ENCODE measurements at regions of chrX and their contacts with region 1.

Region 1: DNA sequence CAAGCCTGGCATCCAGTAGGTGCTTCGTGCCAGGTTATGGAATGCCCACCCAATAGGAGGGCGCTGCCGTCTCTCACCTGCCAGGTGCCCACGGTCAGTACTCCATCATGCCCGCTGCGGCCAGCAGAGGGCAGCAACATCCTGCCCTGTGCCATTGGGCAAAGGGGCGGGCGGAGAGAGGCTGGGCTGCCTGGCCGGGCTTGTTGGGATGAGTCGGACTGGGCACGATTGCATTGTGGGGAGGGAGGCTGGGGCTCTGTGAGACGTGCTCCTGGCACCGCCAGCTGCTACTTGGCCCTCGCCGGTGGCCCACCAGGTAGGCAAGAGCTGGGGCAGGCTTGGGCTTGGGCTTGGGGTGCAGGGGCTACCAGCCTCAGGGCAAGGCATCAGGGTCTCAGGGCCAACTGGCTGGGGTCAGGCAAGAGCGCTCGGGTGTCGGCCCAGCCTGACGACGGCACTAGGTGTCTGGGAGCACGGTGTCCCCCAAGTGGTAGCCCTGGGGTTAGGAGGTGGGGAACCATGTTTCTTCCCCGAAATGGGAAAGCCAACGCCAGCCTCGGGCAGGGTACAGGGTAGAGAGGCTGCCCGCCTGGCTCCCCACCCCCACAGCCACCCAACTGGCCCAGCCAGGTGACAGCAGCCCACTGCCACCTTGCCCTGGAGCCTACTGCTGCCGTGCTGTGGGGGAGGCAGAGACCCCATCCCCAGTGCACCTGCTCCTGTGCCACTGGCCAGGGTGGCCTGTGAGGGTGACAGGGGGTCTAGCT is at the start of gene PLXNB3:
- DNase-seq: peak; percentile 92
- H3K4me3 Mint-ChIP-seq: peak within 1 kb of the TSS; percentile 83
- H3K27ac Mint-ChIP-seq: peak within 1 kb of the TSS; percentile 54
- H3K4me1 Mint-ChIP-seq: peaks cover 11% of the 10 kb centered on the region
- H3K27me3 Mint-ChIP-seq: no peaks in the 10 kb centered on the region
- CTCF ChIP-seq: peak; percentile 70
- total RNA-seq, gene PLXNB3: 37.5 and 49.2 TPM in 2 replicates

Region 2: GRCh38 chrX:153708415-153708814 is 55.8 kb before region 1 on chrX:
- CTCF ChIA-PET with region 1: no interaction called
- intact Hi-C with region 1: no loop called
- DNase-seq: peak; percentile 88
- H3K4me3 Mint-ChIP-seq: peak overlapping the region; percentile 17
- H3K27ac Mint-ChIP-seq: peak overlapping the region; percentile 66
- H3K4me1 Mint-ChIP-seq: peaks cover 8% of the 10 kb centered on the region
- H3K27me3 Mint-ChIP-seq: no peaks in the 10 kb centered on the region
- CTCF ChIP-seq: peak; percentile 60

Region 3: GRCh38 chrX:153885968-153886903 is 122.1 kb after region 1 on chrX and contains the start of gene L1CAM:
- CTCF ChIA-PET with region 1: no interaction called
- intact Hi-C with region 1: loop called (anchors 2 kb)
- DNase-seq: no peak
- H3K4me3 Mint-ChIP-seq: peak within 1 kb of the TSS; percentile 62
- H3K27ac Mint-ChIP-seq: no peak within 1 kb of the TSS
- H3K4me1 Mint-ChIP-seq: peaks cover 26% of the 10 kb centered on the region
- H3K27me3 Mint-ChIP-seq: peaks cover 29% of the 10 kb centered on the region
- CTCF ChIP-seq: no peak
- total RNA-seq, gene L1CAM: 14.2 and 16.1 TPM in 2 replicates

Region 4: GRCh38 chrX:153947009-153947769 is 183.0 kb after region 1 on chrX:
- CTCF ChIA-PET with region 1: interaction called, 4 read pairs
- intact Hi-C with region 1: loop called (anchors 5 kb)
- DNase-seq: peak; percentile 92
- H3K4me3 Mint-ChIP-seq: no peak overlapping the region
- H3K27ac Mint-ChIP-seq: peak overlapping the region; percentile 21
- H3K4me1 Mint-ChIP-seq: no peaks in the 10 kb centered on the region
- H3K27me3 Mint-ChIP-seq: no peaks in the 10 kb centered on the region
- CTCF ChIP-seq: peak; percentile 81

Region 5: GRCh38 chrX:154351183-154352011 is 587.2 kb after region 1 on chrX:
- CTCF ChIA-PET with region 1: no interaction called
- intact Hi-C with region 1: no loop called
- DNase-seq: no peak
- H3K4me3 Mint-ChIP-seq: no peak overlapping the region
- H3K27ac Mint-ChIP-seq: no peak overlapping the region
- H3K4me1 Mint-ChIP-seq: peaks cover 6% of the 10 kb centered on the region
- H3K27me3 Mint-ChIP-seq: no peaks in the 10 kb centered on the region
- CTCF ChIP-seq: no peak